Panc1 (cell line): ENCODE measurements at regions of chr6 and their contacts with region 1.

Region 1: DNA sequence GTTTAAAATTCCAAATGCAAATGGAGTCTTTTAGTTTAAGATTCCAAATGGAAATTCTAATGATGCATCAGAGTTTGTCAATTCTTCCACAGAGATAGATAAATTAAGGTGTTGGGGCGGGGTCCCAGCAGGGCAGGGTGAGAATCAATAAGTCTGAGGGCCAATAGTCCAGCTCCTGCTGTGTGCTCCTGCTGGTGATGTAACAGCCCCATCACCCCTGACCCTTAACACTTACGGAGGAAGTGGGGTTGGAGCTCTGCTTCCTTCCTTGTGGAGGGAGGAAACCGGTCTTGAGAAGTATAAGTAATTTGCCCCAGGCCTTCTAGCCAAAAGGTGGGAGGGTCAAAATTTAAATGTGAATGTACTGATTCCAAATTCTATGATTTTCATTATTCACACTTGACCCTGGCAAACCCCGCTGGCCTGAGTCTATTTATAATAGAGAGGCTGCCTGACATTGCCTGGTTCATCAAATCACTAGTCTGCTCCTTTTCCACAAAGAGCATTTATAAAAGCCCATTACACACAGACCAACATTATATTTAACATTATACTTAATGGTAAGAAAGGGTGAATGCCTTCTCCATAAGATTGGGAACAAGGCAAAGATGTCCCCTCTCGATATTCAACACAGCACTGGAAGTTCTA is 17.2 kb downstream of the ZBTB2 start:
- DNase-seq: no peak
- ATAC-seq: peak; percentile 52; the same call in 1 of the 2 replicates
- H3K4me3 ChIP-seq: peak overlapping the region; percentile 18 to 36; a peak in 3 of 4 replicates
- H3K27ac ChIP-seq: peak overlapping the region; percentile 82
- H3K4me1 ChIP-seq: peaks cover 10% of the 10 kb centered on the region
- H3K27me3 ChIP-seq: no peaks in the 10 kb centered on the region
- CTCF ChIP-seq: no peak

Region 2: GRCh38 chr6:151352410-151353396 is 21.5 kb before region 1 on chr6:
- CTCF ChIA-PET with region 1: no interaction called
- POLR2A ChIA-PET with region 1: interaction called, 18 read pairs
- in situ Hi-C with region 1: no loop called
- intact Hi-C with region 1: no loop called
- DNase-seq: no peak
- ATAC-seq: no peak
- H3K4me3 ChIP-seq: no peak overlapping the region
- H3K27ac ChIP-seq: no peak overlapping the region
- H3K4me1 ChIP-seq: peaks cover 8% of the 10 kb centered on the region; the same call in 1 of the 2 replicates
- H3K27me3 ChIP-seq: no peaks in the 10 kb centered on the region
- CTCF ChIP-seq: no peak